ENCODE measurements at regions of chr9 and their contacts with region 1.

Region 1: GRCh38 chr9:16515879-16516301 is 354.6 kb downstream of the BNC2 start:
- DNase-seq: no peak
- ATAC-seq: peak; percentile 88
- H3K4me3 ChIP-seq: no peak overlapping the region
- H3K27ac ChIP-seq: peak overlapping the region in 1 of 2 donors; percentile 71
- H3K4me1 ChIP-seq: peaks cover 2 to 4% of the 10 kb centered on the region in 2 donors
- H3K27me3 ChIP-seq: no peaks in the 10 kb centered on the region

Region 2: DNA sequence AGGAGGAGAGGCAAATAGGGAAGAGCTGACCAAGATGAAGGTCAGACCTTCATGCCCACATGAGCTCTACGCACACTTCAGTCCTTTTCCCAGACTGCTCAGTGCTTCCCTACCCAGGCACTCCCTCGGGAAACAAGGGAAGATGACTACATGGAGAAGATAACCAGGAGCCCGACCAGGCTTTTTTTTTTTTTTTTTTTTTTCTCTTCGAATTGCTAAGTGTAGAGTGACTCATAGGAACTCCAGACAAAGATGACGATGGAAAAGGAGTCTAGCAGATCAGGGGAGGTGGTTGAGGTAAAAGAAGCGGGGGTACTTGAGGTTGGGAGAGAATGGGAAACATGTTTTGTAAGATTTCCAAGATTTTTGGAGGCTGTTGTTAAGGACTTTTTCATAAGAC is 171.5 kb before region 1 on chr9:
- intact Hi-C with region 1: loop called in 1 of 2 experiments (anchors 10 kb)
- DNase-seq: no peak
- ATAC-seq: peak; percentile 60
- H3K4me3 ChIP-seq: no peak overlapping the region
- H3K27ac ChIP-seq: no peak overlapping the region
- H3K4me1 ChIP-seq: peaks cover 0 to 2% of the 10 kb centered on the region in 2 donors
- H3K27me3 ChIP-seq: no peaks in the 10 kb centered on the region

Region 3: GRCh38 chr9:16579872-16580432 is 64.1 kb after region 1 on chr9:
- intact Hi-C with region 1: loop called in 1 of 2 experiments (anchors 10 kb)
- DNase-seq: no peak
- ATAC-seq: no peak
- H3K4me3 ChIP-seq: no peak overlapping the region
- H3K27ac ChIP-seq: no peak overlapping the region
- H3K4me1 ChIP-seq: peaks cover 0 to 3% of the 10 kb centered on the region in 2 donors
- H3K27me3 ChIP-seq: no peaks in the 10 kb centered on the region

Region 4: GRCh38 chr9:16901589-16901988 is 385.7 kb after region 1 on chr9:
- intact Hi-C with region 1: no loop called
- DNase-seq: no peak
- ATAC-seq: no peak
- H3K4me3 ChIP-seq: no peak overlapping the region
- H3K27ac ChIP-seq: no peak overlapping the region
- H3K4me1 ChIP-seq: no peaks in the 10 kb centered on the region
- H3K27me3 ChIP-seq: no peaks in the 10 kb centered on the region

Region 5: DNA sequence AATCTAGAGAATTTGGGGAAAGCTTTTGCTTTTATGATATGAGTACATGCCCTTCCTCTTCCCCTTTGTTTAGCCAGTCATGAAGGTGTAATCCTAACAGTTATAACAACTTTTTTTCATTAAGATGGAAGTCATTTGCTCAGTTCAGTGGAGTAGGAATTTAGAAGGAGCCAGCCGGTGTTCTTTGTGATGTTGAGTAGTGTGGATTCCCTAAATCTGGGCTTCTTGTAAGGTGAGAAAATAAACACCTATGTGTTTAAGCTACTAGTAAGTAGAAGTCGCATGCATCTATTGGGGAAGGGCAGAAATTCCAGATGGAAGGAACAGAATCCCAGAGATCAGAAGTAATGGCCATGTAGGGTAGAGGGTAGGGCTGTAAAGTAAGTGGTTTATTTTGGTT is 605.4 kb after region 1 on chr9:
- intact Hi-C with region 1: no loop called
- DNase-seq: no peak
- ATAC-seq: no peak
- H3K4me3 ChIP-seq: no peak overlapping the region
- H3K27ac ChIP-seq: no peak overlapping the region
- H3K4me1 ChIP-seq: peaks cover 2 to 3% of the 10 kb centered on the region in 2 donors
- H3K27me3 ChIP-seq: no peaks in the 10 kb centered on the region

Measured in aorta (tissue), 5 donors.